AG04449 (cell line): ENCODE measurements at regions of chr17 and their contacts with region 1.

Region 1: GRCh38 chr17:49997791-49998703 is 3.0 kb upstream of the DLX3 start:
- DNase-seq: peak; percentile 10
- H3K4me3 ChIP-seq: no peak overlapping the region
- CTCF ChIP-seq: peak; percentile 85

Region 2: DNA sequence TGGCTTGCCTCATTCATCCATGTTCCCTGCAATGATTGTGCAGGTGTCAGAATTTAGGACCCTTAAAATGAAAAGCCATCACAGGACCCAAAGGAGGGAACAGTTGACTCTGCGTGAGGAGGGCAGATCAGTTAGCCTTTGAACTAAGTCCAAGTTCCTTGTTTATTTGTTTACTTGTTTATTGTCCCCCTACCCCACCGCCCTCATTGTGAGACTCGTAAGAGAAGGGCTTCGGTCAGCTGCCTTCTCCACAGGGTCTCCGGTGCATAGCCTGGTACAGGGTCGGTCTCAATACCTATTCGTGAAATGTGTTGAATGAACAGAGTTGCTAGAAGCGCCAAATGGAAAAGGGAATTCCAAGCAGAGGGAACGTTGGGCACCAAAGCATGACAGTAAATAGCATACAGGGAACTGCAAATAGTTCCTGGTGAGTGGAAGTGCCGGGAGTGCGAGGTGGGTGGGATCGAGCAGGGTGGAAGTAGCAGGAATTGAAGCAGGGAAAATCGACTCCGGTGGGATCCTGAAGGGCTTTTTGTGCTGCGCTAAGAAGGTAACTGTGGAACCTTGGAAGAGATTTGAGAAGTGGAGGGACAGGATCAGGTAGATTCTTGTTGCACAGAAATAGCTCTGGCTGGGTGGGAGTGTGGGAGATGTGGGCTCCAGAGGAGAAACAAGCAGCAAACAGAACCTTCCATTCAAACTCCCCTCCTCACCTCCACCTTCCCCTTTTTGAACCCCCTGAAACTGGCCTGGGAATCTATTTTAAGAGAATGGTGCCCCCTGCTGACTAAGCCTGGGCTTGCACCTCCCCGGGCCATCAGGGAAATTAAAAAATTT is 303.0 kb before region 1 on chr17:
- CTCF ChIA-PET with region 1: interaction called, 103 read pairs
- POLR2A ChIA-PET with region 1: no interaction called
- DNase-seq: no peak
- H3K4me3 ChIP-seq: no peak overlapping the region
- CTCF ChIP-seq: peak; percentile 73

Region 3: DNA sequence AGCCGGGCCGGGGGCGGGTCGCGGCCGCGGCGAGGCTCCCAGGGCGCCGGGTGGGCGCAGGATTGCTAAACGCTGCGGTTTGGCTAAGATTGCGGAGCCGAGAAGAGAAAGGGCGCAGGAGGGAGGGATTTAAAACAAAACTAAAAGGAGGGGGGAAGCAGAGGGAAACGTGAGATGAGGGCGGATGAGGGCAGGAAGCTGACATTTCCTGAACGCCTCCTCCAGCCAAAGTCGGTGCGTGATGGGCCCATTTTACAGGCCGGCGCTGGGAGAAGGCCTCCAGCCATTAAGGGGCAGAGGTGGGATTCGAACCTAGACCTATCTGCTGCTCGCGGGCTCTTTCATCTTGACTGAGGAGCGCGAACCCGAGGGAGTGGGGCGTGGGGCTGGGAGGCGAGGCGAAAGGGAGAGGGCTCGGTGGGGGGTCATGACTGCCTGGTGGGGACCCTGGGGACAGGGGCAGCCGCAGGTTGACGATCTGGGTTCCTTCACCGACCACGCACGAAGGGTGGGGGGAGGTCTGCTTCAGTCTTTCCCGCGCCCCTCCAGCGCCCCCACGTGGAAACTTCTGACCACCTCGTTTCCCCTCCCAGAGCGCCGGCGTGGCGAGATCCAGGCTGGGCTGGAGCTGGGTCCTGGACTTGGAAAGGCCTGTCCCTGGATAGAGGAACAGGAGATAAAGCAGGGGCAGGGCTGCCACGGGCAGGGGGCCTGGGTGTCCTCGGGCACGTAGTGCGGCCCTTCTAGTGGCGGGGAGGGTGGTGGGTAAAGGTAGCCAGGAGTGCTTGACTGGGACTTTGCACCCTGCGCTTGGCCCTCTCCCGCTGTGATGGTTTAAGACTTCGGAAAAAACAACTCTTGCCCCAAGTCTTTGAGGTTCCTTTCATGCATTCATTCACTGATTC is 146.4 kb before region 1 on chr17:
- CTCF ChIA-PET with region 1: interaction called, 753 read pairs
- POLR2A ChIA-PET with region 1: no interaction called
- DNase-seq: no peak
- H3K4me3 ChIP-seq: peak overlapping the region; percentile 63
- CTCF ChIP-seq: peak; percentile 86

Region 4: GRCh38 chr17:49910094-49910857 is 87.8 kb before region 1 on chr17:
- CTCF ChIA-PET with region 1: interaction called, 38 read pairs
- POLR2A ChIA-PET with region 1: no interaction called
- DNase-seq: no peak
- H3K4me3 ChIP-seq: no peak overlapping the region
- CTCF ChIP-seq: no peak

Region 5: GRCh38 chr17:49959183-49959935 is 38.7 kb before region 1 on chr17:
- CTCF ChIA-PET with region 1: interaction called, 47 read pairs
- POLR2A ChIA-PET with region 1: no interaction called
- DNase-seq: no peak
- H3K4me3 ChIP-seq: no peak overlapping the region
- CTCF ChIP-seq: no peak

Region 6: DNA sequence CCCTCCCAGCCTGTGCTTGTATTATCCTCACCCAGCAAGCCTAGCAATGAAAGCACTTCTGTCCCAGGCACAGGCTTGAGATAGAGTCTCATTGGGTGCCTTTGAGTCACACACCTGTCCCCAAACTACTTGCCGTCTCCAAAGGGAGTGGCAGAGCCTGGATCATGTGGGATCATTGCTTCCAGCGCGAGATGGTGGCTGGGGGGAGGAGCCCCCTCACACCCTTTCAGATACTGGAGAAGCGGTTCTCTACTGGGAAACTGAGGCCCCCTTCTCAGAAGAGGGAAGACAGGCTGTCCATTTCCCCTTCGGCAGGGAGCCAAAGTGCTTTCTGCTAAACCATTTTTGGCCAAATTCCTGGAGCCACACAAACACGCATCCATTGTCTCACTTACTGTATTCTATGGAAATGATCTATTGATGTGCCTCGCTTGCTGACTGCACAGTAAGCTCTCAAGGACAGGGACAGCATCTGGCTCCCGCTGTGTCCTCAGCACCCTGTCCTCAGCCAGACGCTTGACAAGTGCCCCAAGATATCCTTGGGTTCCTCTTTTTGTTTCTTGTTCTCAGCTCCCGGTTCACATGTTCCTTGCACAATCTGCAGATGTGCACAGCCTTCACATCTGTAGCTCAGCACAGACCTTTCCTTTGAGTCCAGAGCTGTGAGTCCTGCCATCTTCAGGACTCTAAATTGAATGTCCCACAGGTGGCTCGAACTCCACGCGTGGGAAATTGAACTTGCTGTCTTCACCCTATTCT is 23.0 kb after region 1 on chr17:
- CTCF ChIA-PET with region 1: interaction called, 37 read pairs
- POLR2A ChIA-PET with region 1: no interaction called
- DNase-seq: no peak
- H3K4me3 ChIP-seq: no peak overlapping the region
- CTCF ChIP-seq: no peak

Region 7: DNA sequence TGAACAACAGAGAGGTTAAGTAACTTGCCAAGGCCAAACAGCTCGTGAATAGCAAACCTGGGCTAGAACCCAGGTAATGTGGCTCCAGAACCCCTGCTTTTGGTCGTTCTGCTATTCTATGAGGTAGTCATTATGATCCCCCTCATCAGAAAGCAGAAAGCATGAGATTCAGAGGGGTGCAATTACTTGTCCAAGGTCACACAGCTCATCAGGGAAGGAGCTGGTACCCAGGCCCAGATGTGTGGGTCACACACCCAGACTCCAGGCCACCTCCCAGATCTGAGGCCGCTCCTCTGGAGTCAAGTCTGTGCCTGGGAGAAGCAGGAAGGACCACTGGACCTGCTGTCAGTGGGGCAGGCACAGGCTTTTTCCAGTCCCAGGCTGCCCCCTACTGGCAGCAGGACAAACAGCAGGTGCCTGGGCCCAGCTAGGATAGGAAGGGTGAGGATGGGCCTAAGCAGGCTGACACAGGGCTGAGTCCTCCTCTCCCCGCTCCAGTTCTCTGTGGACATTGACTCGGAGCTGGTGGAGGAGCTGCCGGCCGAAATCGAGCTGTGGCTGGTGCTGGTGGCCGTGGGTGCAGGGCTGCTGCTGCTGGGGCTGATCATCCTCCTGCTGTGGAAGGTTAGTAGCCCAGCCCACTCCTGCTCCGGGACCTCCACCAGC is 89.3 kb after region 1 on chr17:
- CTCF ChIA-PET with region 1: interaction called, 72 read pairs
- POLR2A ChIA-PET with region 1: no interaction called
- DNase-seq: no peak
- H3K4me3 ChIP-seq: no peak overlapping the region
- CTCF ChIP-seq: peak; percentile 97

Region 8: GRCh38 chr17:50575581-50576210 is 577.6 kb after region 1 on chr17:
- CTCF ChIA-PET with region 1: no interaction called
- POLR2A ChIA-PET with region 1: no interaction called
- DNase-seq: no peak
- H3K4me3 ChIP-seq: no peak overlapping the region
- CTCF ChIP-seq: no peak